ENCODE measurements at regions of chr21 and their contacts with region 1.

Region 1: GRCh38 chr21:36060159-36060921 is at the start of gene SETD4:
- DNase-seq: peak; percentile 97
- total RNA-seq, gene SETD4: 10.6 TPM

Region 2: DNA sequence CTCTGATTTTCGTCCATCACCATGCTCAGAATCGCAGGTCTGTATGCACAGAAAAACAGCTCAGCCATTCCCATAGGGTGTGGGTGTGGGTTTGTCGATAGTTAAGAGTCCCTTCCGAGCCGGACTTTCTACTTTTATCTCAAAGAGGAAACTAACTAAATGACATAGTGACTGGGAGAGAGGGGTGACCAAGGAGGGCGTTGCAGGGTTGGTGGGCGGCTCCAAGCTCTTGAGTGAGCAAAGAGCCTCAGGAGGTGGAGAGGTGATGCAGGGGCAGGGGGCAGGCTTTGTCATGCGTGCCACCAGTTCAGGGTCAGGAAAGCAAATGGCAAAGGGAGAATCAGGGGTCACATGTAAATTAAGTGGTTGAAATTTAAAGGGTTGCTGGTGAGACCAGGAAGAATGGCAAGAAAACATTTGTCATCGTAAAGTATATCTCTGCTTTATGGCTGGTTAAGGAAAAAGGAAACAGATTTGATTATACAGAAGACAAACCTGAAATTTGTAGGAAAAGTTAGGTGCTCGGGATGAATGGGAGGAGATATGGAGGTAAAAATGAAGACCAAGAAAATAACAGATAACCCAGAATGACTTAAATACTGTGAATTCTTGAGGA is 249.0 kb before region 1 on chr21:
- intact Hi-C with region 1: no loop called
- DNase-seq: no peak

Region 3: GRCh38 chr21:36113647-36114428 is 53.5 kb after region 1 on chr21:
- intact Hi-C with region 1: loop called (anchors 5 kb)
- DNase-seq: no peak

Measured in cardiac septum (tissue), 1 donor.